Activated T-helper 1 cell treated with anti-CD3 and anti-CD28 coated beads, Interleukin-12 subunit alpha, Interleukin-12 subunit beta, Interleukin-2, Interleukin-4 antibody, amounts not matched to agents 30 ng/mL and 10 ng/mL and 1 ng/mL, durations not matched to agents 14 hours and 24 hours and 36 hours (primary cell): ENCODE measurements at regions of chr6 and their contacts with region 1.

Region 1: GRCh38 chr6:38671885-38672467 is 31.0 kb downstream of the GLO1 start:
- DNase-seq: peak; percentile 16
- H3K4me3 Mint-ChIP-seq: no peak overlapping the region
- H3K27ac Mint-ChIP-seq: peak overlapping the region; percentile 55
- H3K4me1 Mint-ChIP-seq: peaks cover 39% of the 10 kb centered on the region
- H3K27me3 Mint-ChIP-seq: no peaks in the 10 kb centered on the region

Region 2: DNA sequence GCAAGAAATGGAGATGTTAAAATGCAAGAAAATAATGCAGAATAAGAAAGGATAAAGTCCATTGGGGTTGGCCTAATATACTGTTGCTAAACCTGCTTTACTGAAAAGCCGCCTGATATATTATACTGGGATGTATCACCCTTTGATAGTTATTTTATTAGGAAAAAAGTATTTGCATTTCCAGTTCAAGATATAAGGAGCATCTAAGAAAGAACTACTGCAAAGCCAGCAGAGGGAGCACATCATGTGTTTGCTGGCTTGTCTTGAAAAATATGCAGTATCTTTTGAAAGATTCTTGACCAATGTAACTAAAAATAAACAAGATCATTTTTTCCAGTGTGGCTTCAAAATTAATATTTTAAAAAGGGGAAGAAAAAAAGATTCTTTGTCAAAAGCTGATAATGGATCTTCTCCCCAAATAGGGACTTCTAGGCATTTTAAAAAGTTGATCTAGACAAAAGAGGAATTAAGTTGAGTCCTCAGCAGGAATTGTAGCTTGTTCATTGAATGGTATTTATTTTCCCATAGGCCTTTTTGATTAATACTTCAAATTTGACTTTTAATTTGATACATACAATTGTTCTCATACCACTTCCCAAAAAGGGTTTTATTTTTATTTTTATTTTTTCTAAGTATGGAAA is 637.6 kb before region 1 on chr6:
- intact Hi-C with region 1: loop called (anchors 10 kb)
- DNase-seq: no peak
- H3K4me3 Mint-ChIP-seq: no peak overlapping the region
- H3K27ac Mint-ChIP-seq: no peak overlapping the region
- H3K4me1 Mint-ChIP-seq: peaks cover 34% of the 10 kb centered on the region
- H3K27me3 Mint-ChIP-seq: no peaks in the 10 kb centered on the region

Region 3: GRCh38 chr6:38570750-38571149 is 101.2 kb before region 1 on chr6:
- intact Hi-C with region 1: loop called (anchors 1 kb)
- DNase-seq: no peak
- H3K4me3 Mint-ChIP-seq: no peak overlapping the region
- H3K27ac Mint-ChIP-seq: no peak overlapping the region
- H3K4me1 Mint-ChIP-seq: peaks cover 11% of the 10 kb centered on the region
- H3K27me3 Mint-ChIP-seq: no peaks in the 10 kb centered on the region

Region 4: DNA sequence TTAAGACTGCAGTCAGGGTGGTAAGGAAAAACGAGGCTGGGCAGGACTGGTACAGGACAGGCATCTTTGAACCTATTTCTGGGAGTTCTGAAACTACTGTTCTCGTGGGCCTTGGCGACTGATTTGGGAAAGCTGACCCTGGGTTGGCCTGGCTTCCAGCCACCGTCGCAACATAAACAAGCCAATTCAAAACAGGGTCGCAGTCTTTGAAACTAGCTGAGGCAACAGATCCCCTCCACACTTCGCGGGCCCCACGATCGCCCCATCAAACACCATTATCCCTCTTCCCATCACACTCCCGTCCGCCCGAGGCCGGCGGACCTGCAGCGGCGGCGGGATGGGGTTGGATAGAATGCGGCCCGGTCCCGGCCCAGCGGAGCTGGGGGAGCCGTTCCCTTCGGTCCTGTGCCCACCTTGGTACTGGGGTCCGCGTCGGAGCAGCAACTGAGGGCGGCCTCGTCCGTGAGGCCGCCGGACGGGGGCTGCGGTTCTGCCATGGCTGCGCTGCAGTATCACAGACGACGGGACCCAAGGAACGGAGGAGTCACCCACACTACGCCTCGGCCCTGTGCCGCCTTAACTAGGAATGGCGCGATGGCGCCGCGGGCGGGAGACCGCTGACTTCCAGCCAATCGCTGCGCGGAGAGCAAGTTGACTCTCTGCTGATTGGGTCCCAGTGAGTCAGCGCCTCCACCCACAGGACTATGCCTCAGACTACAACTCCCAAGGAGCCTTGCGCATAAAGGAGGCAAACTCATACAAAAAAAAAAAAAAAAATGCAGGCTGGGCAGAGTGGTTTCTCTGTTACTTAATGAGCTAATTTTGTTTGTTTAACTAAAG is 30.8 kb after region 1 on chr6 and contains the start of gene GLO1:
- intact Hi-C with region 1: loop called (anchors 2 kb)
- DNase-seq: peak; percentile 95
- H3K4me3 Mint-ChIP-seq: peak within 1 kb of the TSS; percentile 91
- H3K27ac Mint-ChIP-seq: peak within 1 kb of the TSS; percentile 85
- H3K4me1 Mint-ChIP-seq: peaks cover 45% of the 10 kb centered on the region
- H3K27me3 Mint-ChIP-seq: peaks cover 7% of the 10 kb centered on the region
- total RNA-seq, gene GLO1: 109 and 110 TPM in 2 replicates

Region 5: DNA sequence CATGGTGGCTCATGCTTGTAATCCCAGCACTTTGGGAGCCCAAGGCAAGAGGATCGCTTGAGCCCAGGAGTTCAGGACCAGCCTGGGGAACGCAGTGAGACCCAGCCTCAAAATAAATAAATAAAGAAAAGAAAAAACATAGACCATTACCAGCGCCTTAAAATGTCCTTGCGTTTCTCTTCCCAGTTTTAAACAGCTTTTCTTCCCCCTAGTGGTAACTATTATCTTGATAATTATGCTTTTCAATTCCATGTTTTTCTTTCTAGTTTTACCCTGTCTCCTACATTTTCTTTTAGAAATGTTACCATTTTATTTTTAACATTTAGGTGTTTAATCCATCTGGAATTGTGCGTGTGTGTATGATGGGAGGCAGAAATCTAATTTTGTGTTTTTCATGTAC is 67.6 kb after region 1 on chr6:
- intact Hi-C with region 1: no loop called
- DNase-seq: no peak
- H3K4me3 Mint-ChIP-seq: no peak overlapping the region
- H3K27ac Mint-ChIP-seq: no peak overlapping the region
- H3K4me1 Mint-ChIP-seq: no peaks in the 10 kb centered on the region
- H3K27me3 Mint-ChIP-seq: peaks cover 45% of the 10 kb centered on the region